ENCODE measurements at regions of chr6 and their contacts with region 1.

Region 1: DNA sequence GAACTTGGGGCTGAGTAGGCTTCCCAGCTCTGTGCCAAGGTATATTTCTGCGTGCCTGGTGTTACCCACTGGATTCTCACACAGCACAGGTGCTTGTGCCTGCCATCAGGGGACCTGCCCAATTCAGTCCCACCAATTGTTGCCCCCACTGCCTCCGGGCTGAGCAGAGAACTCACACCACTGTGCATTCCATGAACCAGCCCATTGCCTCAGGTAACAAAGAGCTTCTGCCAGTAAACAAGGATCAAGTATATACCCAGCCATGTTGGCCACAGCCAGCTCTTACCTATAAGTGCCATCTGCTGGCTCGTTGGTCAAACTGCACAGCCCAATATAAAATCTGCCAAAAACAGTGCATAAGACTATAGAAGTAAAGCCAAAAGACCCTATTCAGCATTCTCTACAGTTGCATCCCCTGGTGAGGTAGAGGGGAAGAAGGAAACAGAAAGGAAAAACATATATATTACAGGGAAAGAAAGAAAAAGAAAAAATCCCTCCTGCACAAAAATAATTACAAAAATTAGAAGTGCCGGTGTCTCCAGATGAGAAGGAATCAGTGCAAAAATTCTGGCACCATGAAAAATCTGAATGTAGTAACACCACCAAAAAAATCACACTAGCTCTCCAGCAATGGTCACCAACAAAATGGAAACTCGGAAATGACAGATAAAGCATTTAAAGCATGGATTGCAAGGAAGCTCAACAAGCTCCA is 241.4 kb downstream of the IBTK start:
- DNase-seq: peak; percentile 64
- ATAC-seq: peak; percentile 78
- H3K4me3 ChIP-seq: no peak overlapping the region
- H3K27ac ChIP-seq: no peak overlapping the region
- H3K4me1 ChIP-seq: peaks cover 9% of the 10 kb centered on the region; the same call in 1 of the 2 replicates
- H3K27me3 ChIP-seq: no peaks in the 10 kb centered on the region
- CTCF ChIP-seq: peak; percentile 81

Region 2: GRCh38 chr6:81766482-81767069 is 239.6 kb before region 1 on chr6:
- CTCF ChIA-PET with region 1: no interaction called
- POLR2A ChIA-PET with region 1: no interaction called
- intact Hi-C with region 1: loop called (anchors 5 kb)
- DNase-seq: peak; percentile 82
- ATAC-seq: peak; percentile 25
- H3K4me3 ChIP-seq: peak overlapping the region; percentile 30
- H3K27ac ChIP-seq: peak overlapping the region; percentile 78
- H3K4me1 ChIP-seq: peaks cover 54% of the 10 kb centered on the region
- H3K27me3 ChIP-seq: no peaks in the 10 kb centered on the region
- CTCF ChIP-seq: no peak

Region 3: GRCh38 chr6:81865712-81866111 is 140.5 kb before region 1 on chr6:
- CTCF ChIA-PET with region 1: no interaction called
- POLR2A ChIA-PET with region 1: no interaction called
- intact Hi-C with region 1: loop called (anchors 10 kb)
- DNase-seq: peak; percentile 73
- ATAC-seq: peak; percentile 91
- H3K4me3 ChIP-seq: no peak overlapping the region
- H3K27ac ChIP-seq: peak overlapping the region; percentile 67
- H3K4me1 ChIP-seq: peaks cover 25% of the 10 kb centered on the region
- H3K27me3 ChIP-seq: no peaks in the 10 kb centered on the region
- CTCF ChIP-seq: no peak

Measured in PC-3 (cell line).